Posterior cingulate gyrus (tissue), 11 donors: ENCODE measurements at regions of chr2 and their contacts with region 1.

Region 1: GRCh38 chr2:240560480-240561326 is 546 bp downstream of the DUSP28 start:
- DNase-seq: peak; percentile 99 to 100 (median 100)

Region 2: GRCh38 chr2:240586198-240586918 is 25.7 kb after region 1 on chr2 and contains the start of gene CAPN10:
- intact Hi-C with region 1: loop called (anchors 1 kb)
- DNase-seq: peak; percentile 97 to 100 (median 99)

Region 3: GRCh38 chr2:240819858-240820606 is 259.3 kb after region 1 on chr2 and contains the start of gene KIF1A:
- intact Hi-C with region 1: loop called (anchors 10 kb)
- DNase-seq: peak; percentile 82 to 99 (median 96)